Testis (tissue), 5 donors: ENCODE measurements at regions of chr3 and their contacts with region 1.

Region 1: DNA sequence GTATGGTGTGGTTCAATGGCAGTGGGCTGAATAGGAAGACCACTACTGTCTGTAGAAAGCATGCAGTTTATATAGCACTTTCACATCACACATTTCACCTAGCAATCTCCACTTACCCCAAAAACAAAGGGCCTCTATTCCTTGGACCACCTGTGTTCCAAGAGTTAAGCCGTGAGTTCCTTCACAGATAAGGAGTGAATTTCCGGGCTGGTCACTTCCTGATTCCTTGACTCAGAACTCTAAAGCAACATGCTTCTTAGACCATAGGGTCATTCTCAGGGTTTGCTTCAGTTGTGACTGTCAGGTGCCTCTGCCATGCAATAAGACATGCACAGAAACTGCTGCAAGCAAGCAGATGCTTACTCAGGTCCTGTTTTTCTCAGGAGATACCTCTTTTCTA is 588.5 kb upstream of the TGFBR2 start:
- DNase-seq: no peak
- H3K4me3 ChIP-seq: no peak overlapping the region
- H3K27ac ChIP-seq: no peak overlapping the region
- H3K4me1 ChIP-seq: no peaks in the 10 kb centered on the region
- H3K27me3 ChIP-seq: no peaks in the 10 kb centered on the region
- CTCF ChIP-seq: no peak
- POLR2A ChIP-seq: no peak

Region 2: DNA sequence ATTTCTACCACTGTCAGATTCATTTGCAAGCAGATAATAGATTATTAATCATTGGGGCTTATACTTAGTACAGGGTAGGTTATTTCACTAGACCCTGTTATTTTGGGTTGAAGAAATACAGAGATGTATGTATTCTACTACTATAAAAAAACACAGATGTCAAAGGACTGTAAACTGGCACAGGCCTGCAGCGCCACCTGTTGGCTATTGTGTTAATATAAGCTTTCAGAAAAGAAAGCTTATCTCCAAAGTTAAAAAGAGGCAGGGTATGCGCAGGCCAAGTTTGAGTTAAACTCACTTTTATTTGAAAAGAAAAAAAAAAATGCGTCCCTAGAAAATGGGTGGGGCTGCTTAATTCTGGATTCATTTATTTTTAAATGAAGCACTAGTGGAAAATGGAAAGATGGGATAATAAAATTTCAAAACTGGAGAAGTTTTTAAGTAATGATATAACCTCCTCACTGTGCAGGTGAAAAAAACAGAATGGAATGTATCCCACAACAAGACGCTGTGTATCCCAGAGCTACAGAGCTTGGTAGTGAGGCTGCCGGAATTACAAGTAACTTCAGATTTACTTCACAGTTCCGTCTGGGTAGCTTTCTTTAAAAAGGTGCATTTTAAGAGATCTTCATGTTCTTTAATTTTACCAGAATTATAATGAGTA is 181.3 kb after region 1 on chr3:
- intact Hi-C with region 1: loop called (anchors 5 kb)
- DNase-seq: peak; percentile 89
- H3K4me3 ChIP-seq: no peak overlapping the region
- H3K27ac ChIP-seq: no peak overlapping the region
- H3K4me1 ChIP-seq: peaks cover 9% of the 10 kb centered on the region
- H3K27me3 ChIP-seq: no peaks in the 10 kb centered on the region
- CTCF ChIP-seq: peak; percentile 80 to 92 (median 85)
- POLR2A ChIP-seq: no peak